Activated CD4-positive, alpha-beta T cell treated with anti-CD3 and anti-CD28 coated beads for 36 hours (primary cell): ENCODE measurements at regions of chr7 and their contacts with region 1.

Region 1: GRCh38 chr7:92731335-92732063 is 104.9 kb downstream of the CDK6 start:
- DNase-seq: peak; percentile 68
- ATAC-seq: peak; percentile 72
- H3K4me3 Mint-ChIP-seq: peak overlapping the region; percentile 21
- H3K27ac Mint-ChIP-seq: peak overlapping the region; percentile 88
- H3K4me1 Mint-ChIP-seq: peaks cover 61% of the 10 kb centered on the region
- H3K27me3 Mint-ChIP-seq: no peaks in the 10 kb centered on the region

Region 2: GRCh38 chr7:92641921-92642511 is 89.5 kb before region 1 on chr7:
- CTCF ChIA-PET with region 1: no interaction called
- POLR2A ChIA-PET with region 1: no interaction called
- intact Hi-C with region 1: loop called in 1 of 2 experiments (anchors 2 kb)
- DNase-seq: peak; percentile 78
- ATAC-seq: peak; percentile 69
- H3K4me3 Mint-ChIP-seq: peak overlapping the region; percentile 37
- H3K27ac Mint-ChIP-seq: peak overlapping the region; percentile 92
- H3K4me1 Mint-ChIP-seq: peaks cover 86% of the 10 kb centered on the region
- H3K27me3 Mint-ChIP-seq: no peaks in the 10 kb centered on the region

Region 3: DNA sequence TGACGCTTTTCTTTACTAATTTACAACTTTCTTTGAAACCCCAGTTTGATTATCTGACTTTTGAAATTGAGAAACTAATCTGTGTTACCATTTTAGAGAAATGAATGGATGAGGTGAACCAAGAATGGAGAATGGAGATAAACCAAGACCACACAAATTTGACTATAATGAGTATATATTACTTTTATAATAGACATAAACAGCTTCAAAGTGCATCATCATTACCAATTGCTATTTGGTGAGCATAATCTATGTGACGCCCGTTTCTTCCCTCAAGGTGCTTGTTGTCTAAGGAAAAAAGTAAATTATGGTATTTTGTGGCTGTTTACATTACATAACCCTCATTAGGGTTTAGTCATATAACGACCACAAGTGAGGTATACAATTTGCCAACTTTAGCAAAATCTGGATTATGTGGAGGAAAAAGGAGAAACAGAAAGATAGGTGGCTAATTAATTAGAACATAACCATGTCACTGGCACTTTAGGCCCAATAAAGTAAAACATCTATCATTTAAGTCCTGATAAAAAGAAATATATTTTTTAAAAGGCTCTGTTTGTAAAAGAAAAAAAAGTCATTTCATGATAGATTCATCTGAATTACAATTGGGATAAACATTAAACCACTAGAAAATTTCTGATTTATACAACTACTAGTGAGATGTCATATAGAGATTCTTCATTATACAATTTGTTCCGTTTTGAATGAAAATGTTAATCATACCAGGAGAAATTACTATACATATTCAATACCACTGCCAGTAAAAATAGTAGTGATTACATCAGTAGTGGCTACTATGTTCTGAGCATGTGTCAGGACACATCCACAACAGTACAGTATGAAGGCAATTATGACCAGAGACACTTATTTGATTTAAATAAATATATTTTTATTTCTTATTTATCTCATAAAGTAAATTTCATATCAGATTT is 23.1 kb before region 1 on chr7:
- CTCF ChIA-PET with region 1: interaction called, 3 read pairs
- POLR2A ChIA-PET with region 1: no interaction called
- intact Hi-C with region 1: loop called (anchors 1 kb)
- DNase-seq: no peak
- ATAC-seq: peak; percentile 84
- H3K4me3 Mint-ChIP-seq: no peak overlapping the region
- H3K27ac Mint-ChIP-seq: peak overlapping the region; percentile 86
- H3K4me1 Mint-ChIP-seq: peaks cover 52% of the 10 kb centered on the region
- H3K27me3 Mint-ChIP-seq: no peaks in the 10 kb centered on the region

Region 4: DNA sequence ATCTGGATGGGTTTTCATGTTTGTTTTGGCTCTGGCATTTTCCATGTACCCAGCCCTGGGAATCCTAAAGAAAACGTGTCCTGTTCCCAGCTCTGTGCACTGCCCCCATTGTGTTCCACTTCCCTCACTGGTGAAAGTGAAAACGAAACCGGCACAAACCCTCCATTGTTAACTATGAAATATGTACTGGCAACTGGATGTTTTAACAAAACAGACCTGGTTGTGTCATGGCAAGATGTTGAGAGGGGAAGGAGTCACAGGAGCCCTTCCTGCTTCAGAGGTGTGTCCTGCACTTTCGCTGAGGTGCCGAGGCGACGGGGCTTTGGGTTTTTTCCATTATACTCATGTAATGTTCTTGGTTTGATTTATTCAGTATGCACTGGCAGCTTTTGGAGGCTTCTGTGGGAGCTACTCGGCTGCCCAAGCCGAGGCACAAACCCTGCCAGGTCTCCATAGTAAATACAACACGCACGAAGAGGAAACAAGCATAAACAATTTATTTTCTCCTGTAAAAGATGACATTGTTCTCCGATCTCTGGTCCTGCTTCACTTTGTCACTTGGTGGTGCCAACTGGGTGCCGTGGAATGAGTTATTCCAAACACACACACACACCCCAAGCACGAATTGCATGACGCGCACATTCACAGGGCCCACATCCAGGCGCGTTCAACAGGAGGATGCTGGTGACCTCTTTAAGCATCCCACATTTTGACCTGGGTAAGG is 13.3 kb before region 1 on chr7:
- CTCF ChIA-PET with region 1: interaction called, 7 read pairs
- POLR2A ChIA-PET with region 1: interaction called, 8 read pairs
- intact Hi-C with region 1: loop called (anchors 1 kb)
- DNase-seq: peak; percentile 80
- ATAC-seq: peak; percentile 95
- H3K4me3 Mint-ChIP-seq: peak overlapping the region; percentile 66
- H3K27ac Mint-ChIP-seq: peak overlapping the region; percentile 85
- H3K4me1 Mint-ChIP-seq: peaks cover 64% of the 10 kb centered on the region
- H3K27me3 Mint-ChIP-seq: no peaks in the 10 kb centered on the region

Region 5: GRCh38 chr7:92768501-92769393 is 37.2 kb after region 1 on chr7:
- CTCF ChIA-PET with region 1: no interaction called
- POLR2A ChIA-PET with region 1: interaction called, 3 read pairs
- intact Hi-C with region 1: loop called (anchors 1 to 2 kb)
- DNase-seq: peak; percentile 61
- ATAC-seq: peak; percentile 95
- H3K4me3 Mint-ChIP-seq: peak overlapping the region; percentile 21
- H3K27ac Mint-ChIP-seq: peak overlapping the region; percentile 89
- H3K4me1 Mint-ChIP-seq: peaks cover 67% of the 10 kb centered on the region
- H3K27me3 Mint-ChIP-seq: no peaks in the 10 kb centered on the region